Left ventricle myocardium superior (tissue), 1 donor: ENCODE measurements at regions of chr6 and their contacts with region 1.

Region 1: GRCh38 chr6:154805288-154805911 is 72.2 kb downstream of the SCAF8 start:
- DNase-seq: no peak
- ATAC-seq: no peak

Region 2: DNA sequence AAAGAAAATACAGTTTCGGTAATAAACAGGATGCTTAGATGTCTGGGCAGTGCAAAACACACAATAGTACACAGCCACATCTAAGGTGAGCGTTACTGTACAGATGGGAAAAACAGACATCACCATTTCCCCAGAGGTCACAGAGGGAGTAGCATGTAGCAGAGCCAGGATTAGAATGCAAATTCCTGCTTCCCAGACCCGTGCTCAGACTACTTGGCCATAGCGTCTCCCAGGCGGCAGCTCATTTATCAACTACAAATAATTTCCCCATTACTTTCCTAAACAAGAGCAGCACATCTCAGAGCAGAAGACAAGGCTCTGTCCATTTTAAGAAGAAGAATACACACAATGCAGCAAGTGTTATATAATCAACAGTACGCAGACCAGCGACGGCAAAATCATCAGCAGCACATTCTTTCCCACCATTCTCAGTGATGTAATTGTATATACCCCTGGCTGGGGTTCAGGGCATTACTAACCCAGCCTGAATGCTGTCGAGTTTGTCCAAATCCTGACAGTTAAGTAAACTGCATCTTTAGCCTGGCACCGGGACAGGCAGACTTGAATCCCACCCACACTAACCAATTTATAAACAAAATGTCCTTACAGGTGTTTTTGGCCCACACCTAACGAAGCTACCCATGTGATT is 356.8 kb before region 1 on chr6:
- intact Hi-C with region 1: no loop called
- DNase-seq: no peak
- ATAC-seq: peak; percentile 89

Region 3: GRCh38 chr6:154675602-154676088 is 129.8 kb before region 1 on chr6:
- intact Hi-C with region 1: loop called (anchors 5 kb)
- DNase-seq: peak; percentile 80
- ATAC-seq: peak; percentile 99

Region 4: GRCh38 chr6:154733012-154733625 is 72.3 kb before region 1 on chr6 and contains the start of gene SCAF8:
- intact Hi-C with region 1: loop called (anchors 10 kb)
- DNase-seq: peak; percentile 92
- ATAC-seq: peak; percentile 88
- total RNA-seq, gene SCAF8: 52.8 TPM

Region 5: DNA sequence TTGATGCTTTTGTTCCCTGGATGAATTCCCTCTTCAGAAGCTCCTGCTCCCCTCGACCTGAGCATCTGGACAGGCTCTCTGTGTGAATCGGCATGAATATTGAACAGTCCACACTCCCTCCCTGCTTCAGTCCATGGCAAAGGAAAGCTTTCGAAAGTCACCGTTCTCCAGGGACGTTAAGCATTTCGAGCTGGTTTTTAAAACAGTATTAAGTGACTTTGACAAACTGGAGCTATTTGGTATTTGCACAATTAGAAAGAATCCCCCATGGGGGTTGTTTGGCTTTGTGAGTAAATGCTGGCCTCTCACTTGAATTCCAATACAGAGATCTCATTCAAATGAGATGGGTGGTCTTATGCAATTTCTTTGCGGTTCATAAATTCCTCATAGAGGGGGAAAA is 104.4 kb after region 1 on chr6:
- intact Hi-C with region 1: no loop called
- DNase-seq: no peak
- ATAC-seq: no peak